Endothelial cell of umbilical vein (primary cell): ENCODE measurements at regions of chr17 and their contacts with region 1.

Region 1: DNA sequence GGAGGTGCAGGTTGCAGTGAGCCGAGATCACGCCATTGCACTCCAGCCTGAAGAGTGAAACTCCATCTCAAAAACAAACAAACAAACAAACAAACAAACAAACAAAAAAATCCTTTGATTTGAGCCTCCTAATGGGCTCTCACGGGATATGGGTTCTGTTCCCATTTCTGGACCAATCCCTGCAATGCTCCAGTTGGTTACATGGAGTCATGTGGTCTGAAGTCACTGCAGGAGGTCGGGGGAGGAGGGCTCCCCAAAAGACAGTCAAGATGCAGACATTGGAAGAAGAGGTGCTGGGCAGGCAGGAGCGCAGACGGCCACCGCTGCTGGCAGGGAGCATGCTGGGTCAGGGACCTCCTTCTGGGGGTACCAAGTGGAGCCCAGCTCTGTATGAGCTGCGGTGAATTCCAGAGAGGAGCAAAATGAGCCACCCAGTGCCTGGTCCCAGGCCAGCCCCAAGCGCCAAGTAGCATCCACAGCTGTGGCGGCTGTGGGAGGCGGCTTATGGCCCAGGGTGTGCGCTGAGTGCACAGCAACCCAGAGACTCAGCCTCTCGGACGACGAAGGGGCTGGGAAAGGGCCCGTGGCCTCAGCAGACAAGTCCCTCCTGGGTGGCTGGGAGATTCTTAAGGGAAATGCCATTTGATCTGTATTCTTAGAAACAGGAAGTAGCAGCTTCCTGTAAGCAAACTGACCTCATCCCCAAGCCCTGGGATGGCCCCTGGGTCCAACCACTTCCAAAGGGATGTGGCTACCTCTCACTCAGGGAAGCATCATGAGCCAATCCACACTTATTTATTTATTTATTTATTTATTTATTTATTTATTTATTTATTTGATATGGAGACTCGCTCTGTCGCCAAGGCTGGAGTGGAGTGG is 19.6 kb upstream of the ATP2A3 start:
- DNase-seq: peak; percentile 67
- H3K4me3 ChIP-seq: no peak overlapping the region
- H3K27ac ChIP-seq: peak overlapping the region; percentile 15
- H3K4me1 ChIP-seq: peaks cover 30% of the 10 kb centered on the region
- H3K27me3 ChIP-seq: no peaks in the 10 kb centered on the region
- CTCF ChIP-seq: no peak
- POLR2A ChIP-seq: no peak

Region 2: DNA sequence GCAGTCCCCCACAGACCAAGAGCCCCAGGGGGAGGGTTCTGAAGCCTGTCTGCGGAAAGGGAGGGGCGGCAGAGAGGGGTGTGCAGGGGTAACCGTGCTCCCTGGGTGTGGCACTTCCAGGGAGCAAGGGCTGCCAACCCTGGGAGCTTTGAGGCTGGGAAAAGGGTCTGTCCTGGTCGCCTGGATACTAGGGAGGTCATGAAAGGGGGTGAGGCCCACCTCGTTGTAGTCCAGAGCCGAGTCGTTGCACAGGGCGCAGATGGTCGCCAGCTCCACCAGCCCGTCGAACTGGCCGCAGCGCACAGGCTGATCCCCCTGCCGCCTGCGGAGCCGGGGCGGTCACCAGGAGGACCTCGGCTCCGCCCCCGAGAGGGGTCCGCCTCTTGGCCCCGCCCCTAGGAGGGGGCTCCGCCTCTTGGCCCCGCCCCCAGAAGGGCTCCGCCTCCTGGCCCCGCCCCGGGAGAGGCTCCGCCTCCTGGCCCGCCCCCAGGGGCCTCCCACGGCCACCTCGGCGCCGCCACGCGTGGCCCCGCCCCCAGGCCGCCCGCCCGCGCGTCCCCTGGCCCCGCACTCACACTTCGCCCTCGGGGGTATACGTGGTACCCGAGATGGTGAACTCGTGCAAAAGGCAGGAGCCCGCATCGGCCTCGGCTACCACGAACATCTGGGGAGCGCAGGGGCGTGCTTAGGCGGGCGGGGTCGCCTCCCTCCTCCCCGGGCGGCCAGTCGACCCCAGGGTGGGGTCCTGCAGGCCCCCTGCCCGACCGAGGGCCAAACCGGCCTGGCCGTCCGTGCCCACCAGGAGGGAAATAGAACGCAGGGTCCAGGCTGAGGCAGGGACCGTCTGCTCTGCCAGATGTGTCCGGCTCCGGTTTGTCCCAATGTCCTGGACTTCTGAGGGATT is 39.1 kb before region 1 on chr17:
- CTCF ChIA-PET with region 1: no interaction called
- POLR2A ChIA-PET with region 1: interaction called, 5 read pairs
- dilution Hi-C with region 1: no loop called
- intact Hi-C with region 1: loop called (anchors 2 kb)
- DNase-seq: peak; percentile 63
- H3K4me3 ChIP-seq: peak overlapping the region in 2 of 3 experiments; percentile 36 to 40
- H3K27ac ChIP-seq: no peak overlapping the region
- H3K4me1 ChIP-seq: peaks cover 3% of the 10 kb centered on the region
- H3K27me3 ChIP-seq: no peaks in the 10 kb centered on the region
- CTCF ChIP-seq: no peak
- POLR2A ChIP-seq: no peak

Region 3: GRCh38 chr17:4492721-4493561 is 509.1 kb after region 1 on chr17:
- CTCF ChIA-PET with region 1: no interaction called
- POLR2A ChIA-PET with region 1: no interaction called
- dilution Hi-C with region 1: no loop called
- intact Hi-C with region 1: no loop called
- DNase-seq: peak; percentile 54
- H3K4me3 ChIP-seq: no peak overlapping the region
- H3K27ac ChIP-seq: no peak overlapping the region
- H3K4me1 ChIP-seq: no peaks in the 10 kb centered on the region
- H3K27me3 ChIP-seq: no peaks in the 10 kb centered on the region
- CTCF ChIP-seq: no peak
- POLR2A ChIP-seq: no peak